ENCODE measurements at regions of chr13 and their contacts with region 1.

Region 1: GRCh38 chr13:46321494-46322225 is 65.4 kb downstream of the RUBCNL start:
- DNase-seq: peak; percentile 90
- ATAC-seq: peak; percentile 90
- H3K4me3 Mint-ChIP-seq: peak overlapping the region; percentile 85
- H3K27ac Mint-ChIP-seq: peak overlapping the region; percentile 97
- H3K4me1 Mint-ChIP-seq: peaks cover 29% of the 10 kb centered on the region
- H3K27me3 Mint-ChIP-seq: no peaks in the 10 kb centered on the region
- CTCF ChIP-seq: peak; percentile 93

Region 2: DNA sequence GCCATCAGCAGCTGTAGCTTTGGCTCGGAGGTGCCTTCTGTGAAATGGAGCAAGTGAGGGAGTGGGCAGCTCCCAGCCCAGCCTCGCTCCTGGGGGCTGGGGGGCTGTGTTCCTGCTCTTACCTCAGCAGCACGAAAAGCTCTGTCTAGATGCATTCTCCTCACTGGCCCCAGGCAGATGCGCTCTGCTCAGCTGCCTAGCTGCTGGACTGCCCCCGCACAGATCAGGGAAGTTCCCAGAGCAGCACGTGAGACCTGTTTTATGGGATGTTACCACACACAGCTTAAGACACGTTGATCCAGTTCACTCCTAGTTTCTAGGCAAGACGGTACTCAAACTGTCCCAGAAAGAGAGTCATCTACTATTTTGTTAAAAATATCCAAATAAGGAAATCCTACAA is 153.3 kb before region 1 on chr13:
- CTCF ChIA-PET with region 1: interaction called, 7 read pairs
- POLR2A ChIA-PET with region 1: no interaction called
- intact Hi-C with region 1: loop called (anchors 5 kb)
- DNase-seq: peak; percentile 74
- ATAC-seq: peak; percentile 38
- H3K4me3 Mint-ChIP-seq: peak overlapping the region; percentile 75
- H3K27ac Mint-ChIP-seq: peak overlapping the region; percentile 88
- H3K4me1 Mint-ChIP-seq: peaks cover 88% of the 10 kb centered on the region
- H3K27me3 Mint-ChIP-seq: no peaks in the 10 kb centered on the region
- CTCF ChIP-seq: no peak

Region 3: GRCh38 chr13:46288570-46289259 is 32.9 kb before region 1 on chr13:
- CTCF ChIA-PET with region 1: interaction called, 31 read pairs
- POLR2A ChIA-PET with region 1: interaction called, 6 read pairs
- intact Hi-C with region 1: no loop called
- DNase-seq: no peak
- ATAC-seq: peak; percentile 88
- H3K4me3 Mint-ChIP-seq: no peak overlapping the region
- H3K27ac Mint-ChIP-seq: no peak overlapping the region
- H3K4me1 Mint-ChIP-seq: peaks cover 12% of the 10 kb centered on the region
- H3K27me3 Mint-ChIP-seq: no peaks in the 10 kb centered on the region
- CTCF ChIP-seq: peak; percentile 94

Region 4: DNA sequence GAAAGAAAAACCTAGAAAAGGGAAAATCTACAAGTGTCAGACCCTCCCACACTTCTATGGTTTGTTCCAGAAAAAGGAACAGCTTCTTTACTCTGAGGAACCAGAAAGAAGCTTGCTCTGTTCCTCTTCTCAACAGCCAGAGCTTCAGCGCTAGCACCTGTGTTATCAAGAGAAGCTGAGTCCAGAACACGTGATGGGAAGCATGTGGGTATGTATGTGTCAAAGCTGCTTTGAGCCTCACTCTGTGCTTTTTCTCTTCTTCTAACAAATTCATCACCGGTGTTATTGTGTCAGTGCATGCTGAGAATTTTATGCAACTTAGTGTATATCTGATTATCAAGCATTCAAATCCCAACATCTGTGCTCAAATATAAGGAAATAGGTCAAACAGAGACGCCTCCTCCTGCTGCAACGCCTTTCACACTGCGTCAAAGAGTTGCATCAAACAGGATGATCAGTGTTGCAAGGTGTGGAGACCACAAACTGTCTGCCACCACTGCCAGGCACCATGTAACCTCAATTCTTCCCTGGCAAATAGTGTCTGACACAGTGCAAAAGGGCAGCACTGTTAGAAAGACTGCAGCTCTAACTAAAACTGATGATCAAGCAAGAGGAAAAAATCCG is 26.1 kb before region 1 on chr13:
- CTCF ChIA-PET with region 1: interaction called, 31 read pairs
- POLR2A ChIA-PET with region 1: interaction called, 6 read pairs
- intact Hi-C with region 1: no loop called
- DNase-seq: peak; percentile 81
- ATAC-seq: peak; percentile 86
- H3K4me3 Mint-ChIP-seq: peak overlapping the region; percentile 52
- H3K27ac Mint-ChIP-seq: peak overlapping the region; percentile 94
- H3K4me1 Mint-ChIP-seq: peaks cover 43% of the 10 kb centered on the region
- H3K27me3 Mint-ChIP-seq: no peaks in the 10 kb centered on the region
- CTCF ChIP-seq: no peak

Region 5: GRCh38 chr13:46303742-46304385 is 17.8 kb before region 1 on chr13:
- CTCF ChIA-PET with region 1: interaction called, 15 read pairs
- POLR2A ChIA-PET with region 1: interaction called, 4 read pairs
- intact Hi-C with region 1: no loop called
- DNase-seq: no peak
- ATAC-seq: peak; percentile 81
- H3K4me3 Mint-ChIP-seq: peak overlapping the region; percentile 34
- H3K27ac Mint-ChIP-seq: peak overlapping the region; percentile 57
- H3K4me1 Mint-ChIP-seq: peaks cover 21% of the 10 kb centered on the region
- H3K27me3 Mint-ChIP-seq: no peaks in the 10 kb centered on the region
- CTCF ChIP-seq: no peak

Region 6: DNA sequence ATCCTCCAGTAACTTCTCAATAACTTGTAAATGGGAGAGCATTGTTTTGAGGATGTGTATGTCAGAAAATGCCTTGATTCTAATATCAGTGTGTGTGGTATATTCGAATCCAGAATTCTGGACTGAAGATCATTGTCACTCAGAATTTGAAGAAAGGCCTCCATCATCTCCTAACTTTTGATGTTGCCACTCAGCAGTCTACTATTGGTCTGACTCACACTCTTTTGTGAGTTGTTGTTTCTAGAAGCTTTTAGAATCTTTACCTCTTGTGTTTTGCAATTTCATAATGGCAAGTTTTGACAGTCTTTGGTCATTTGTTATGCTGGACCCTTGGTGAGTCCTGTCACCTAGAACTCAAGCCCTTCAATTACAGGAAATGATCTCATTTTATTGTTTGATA is 11.6 kb before region 1 on chr13:
- CTCF ChIA-PET with region 1: interaction called, 15 read pairs
- POLR2A ChIA-PET with region 1: interaction called, 4 read pairs
- intact Hi-C with region 1: no loop called
- DNase-seq: no peak
- ATAC-seq: no peak
- H3K4me3 Mint-ChIP-seq: no peak overlapping the region
- H3K27ac Mint-ChIP-seq: no peak overlapping the region
- H3K4me1 Mint-ChIP-seq: peaks cover 20% of the 10 kb centered on the region
- H3K27me3 Mint-ChIP-seq: no peaks in the 10 kb centered on the region
- CTCF ChIP-seq: no peak

Region 7: GRCh38 chr13:46334035-46334822 is 12.6 kb after region 1 on chr13:
- CTCF ChIA-PET with region 1: interaction called, 19 read pairs
- POLR2A ChIA-PET with region 1: no interaction called
- intact Hi-C with region 1: no loop called
- DNase-seq: no peak
- ATAC-seq: peak; percentile 68
- H3K4me3 Mint-ChIP-seq: no peak overlapping the region
- H3K27ac Mint-ChIP-seq: peak overlapping the region; percentile 34
- H3K4me1 Mint-ChIP-seq: peaks cover 32% of the 10 kb centered on the region
- H3K27me3 Mint-ChIP-seq: no peaks in the 10 kb centered on the region
- CTCF ChIP-seq: no peak

Region 8: DNA sequence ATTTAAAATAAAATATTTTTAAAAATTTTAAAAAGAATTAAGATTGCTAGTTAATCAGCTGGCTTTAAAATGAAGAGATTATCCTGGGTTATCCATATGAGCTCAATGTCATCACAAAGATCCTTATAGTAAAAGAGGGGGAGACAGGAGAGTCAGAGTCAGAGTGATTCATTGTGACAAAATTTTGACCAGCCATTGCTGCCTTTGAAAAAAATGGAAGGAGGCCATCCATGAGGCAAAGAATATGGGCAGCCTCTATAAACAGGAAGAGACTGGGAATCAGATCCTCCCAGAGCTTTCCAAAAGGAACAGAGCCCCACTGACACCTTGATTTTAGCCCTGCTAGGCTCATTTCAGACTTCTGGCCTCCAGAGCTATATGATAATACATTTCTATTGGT is 74.7 kb after region 1 on chr13:
- CTCF ChIA-PET with region 1: no interaction called
- POLR2A ChIA-PET with region 1: no interaction called
- intact Hi-C with region 1: no loop called
- DNase-seq: no peak
- ATAC-seq: no peak
- H3K4me3 Mint-ChIP-seq: no peak overlapping the region
- H3K27ac Mint-ChIP-seq: no peak overlapping the region
- H3K4me1 Mint-ChIP-seq: no peaks in the 10 kb centered on the region
- H3K27me3 Mint-ChIP-seq: no peaks in the 10 kb centered on the region
- CTCF ChIP-seq: no peak

Region 9: DNA sequence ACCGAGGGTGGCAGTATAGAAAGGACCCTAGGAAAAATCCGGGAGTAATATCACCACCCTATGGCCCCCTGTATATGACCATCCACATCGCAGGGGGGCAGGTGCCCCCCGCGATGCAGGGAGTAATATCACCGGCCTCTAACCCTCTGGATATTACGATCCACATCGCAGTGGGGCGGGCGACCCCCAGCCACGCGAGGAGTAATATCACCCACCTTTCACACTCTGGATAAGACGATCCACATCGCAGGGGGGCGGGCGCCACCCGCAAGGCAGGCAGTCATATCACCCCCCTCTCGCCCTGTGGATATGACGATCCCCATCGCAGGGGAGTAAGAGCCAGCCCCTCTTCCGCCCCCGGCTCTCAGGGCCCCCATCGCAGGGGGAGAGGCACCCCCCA is 142.1 kb after region 1 on chr13:
- CTCF ChIA-PET with region 1: no interaction called
- POLR2A ChIA-PET with region 1: no interaction called
- intact Hi-C with region 1: no loop called
- DNase-seq: no peak
- ATAC-seq: no peak
- H3K4me3 Mint-ChIP-seq: no peak overlapping the region
- H3K27ac Mint-ChIP-seq: no peak overlapping the region
- H3K4me1 Mint-ChIP-seq: no peaks in the 10 kb centered on the region
- H3K27me3 Mint-ChIP-seq: peaks cover 3% of the 10 kb centered on the region
- CTCF ChIP-seq: no peak

Region 10: DNA sequence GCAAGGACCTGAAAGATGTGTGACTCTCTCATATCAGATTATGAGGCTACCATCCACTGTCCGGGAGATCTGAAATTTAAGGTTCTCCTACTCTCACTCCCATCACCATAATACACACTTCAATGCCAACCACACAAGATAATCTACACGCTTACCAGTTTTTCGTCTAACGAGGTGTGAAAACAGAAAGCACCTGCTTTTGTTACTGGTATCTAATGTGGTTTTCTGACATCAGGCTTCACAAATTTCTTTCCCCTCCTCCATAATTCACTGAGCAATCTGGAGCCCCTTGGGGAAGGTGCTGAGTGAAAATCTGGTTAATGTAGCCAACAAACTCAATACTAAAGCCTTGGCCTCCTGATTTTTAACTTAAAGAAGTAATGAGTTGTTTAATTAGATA is 221.2 kb after region 1 on chr13:
- CTCF ChIA-PET with region 1: no interaction called
- POLR2A ChIA-PET with region 1: no interaction called
- intact Hi-C with region 1: no loop called
- DNase-seq: no peak
- ATAC-seq: peak; percentile 55
- H3K4me3 Mint-ChIP-seq: no peak overlapping the region
- H3K27ac Mint-ChIP-seq: no peak overlapping the region
- H3K4me1 Mint-ChIP-seq: peaks cover 4% of the 10 kb centered on the region
- H3K27me3 Mint-ChIP-seq: no peaks in the 10 kb centered on the region
- CTCF ChIP-seq: no peak